ENCODE measurements at regions of chr4 and their contacts with region 1.

Region 1: DNA sequence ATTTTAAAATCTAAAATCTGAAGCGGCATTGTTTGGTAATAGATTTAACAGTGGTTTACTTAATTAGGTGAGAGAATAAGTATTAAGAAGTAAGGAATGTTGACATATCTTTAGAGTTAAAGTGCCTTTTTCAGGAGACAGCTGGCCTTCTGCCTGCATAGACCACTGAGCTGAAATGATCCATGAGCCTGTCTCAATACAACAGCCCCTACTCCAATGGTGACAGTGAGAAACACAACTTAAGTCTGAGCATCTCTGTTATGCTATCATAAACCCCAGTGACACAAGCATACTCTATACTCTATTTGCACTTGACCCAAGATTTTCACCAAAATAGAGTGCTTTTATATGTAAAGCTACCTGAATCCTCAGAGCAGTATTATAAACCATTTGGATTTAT is 137.9 kb downstream of the GRIA2 start:
- DNase-seq: no peak
- H3K4me3 Mint-ChIP-seq: no peak overlapping the region
- H3K27ac Mint-ChIP-seq: no peak overlapping the region
- H3K4me1 Mint-ChIP-seq: no peaks in the 10 kb centered on the region
- H3K27me3 Mint-ChIP-seq: no peaks in the 10 kb centered on the region
- CTCF ChIP-seq: no peak

Region 2: GRCh38 chr4:157616741-157617472 is 258.5 kb after region 1 on chr4:
- CTCF ChIA-PET with region 1: interaction called, 10 read pairs
- intact Hi-C with region 1: no loop called
- DNase-seq: no peak
- H3K4me3 Mint-ChIP-seq: no peak overlapping the region
- H3K27ac Mint-ChIP-seq: no peak overlapping the region
- H3K4me1 Mint-ChIP-seq: no peaks in the 10 kb centered on the region
- H3K27me3 Mint-ChIP-seq: no peaks in the 10 kb centered on the region
- CTCF ChIP-seq: no peak